ENCODE measurements at regions of chr20 and their contacts with region 1.

Region 1: GRCh38 chr20:49915378-49916145 is at the start of gene SPATA2:
- DNase-seq: peak; percentile 91
- H3K4me3 ChIP-seq: peak within 1 kb of the TSS; percentile 65 to 81 (median 66)
- H3K27ac ChIP-seq: peak within 1 kb of the TSS; percentile 97
- H3K4me1 ChIP-seq: peaks cover 21% of the 10 kb centered on the region
- H3K27me3 ChIP-seq: no peaks in the 10 kb centered on the region
- CTCF ChIP-seq: no peak
- total RNA-seq, gene SPATA2: 4.2 to 6.9 TPM

Region 2: DNA sequence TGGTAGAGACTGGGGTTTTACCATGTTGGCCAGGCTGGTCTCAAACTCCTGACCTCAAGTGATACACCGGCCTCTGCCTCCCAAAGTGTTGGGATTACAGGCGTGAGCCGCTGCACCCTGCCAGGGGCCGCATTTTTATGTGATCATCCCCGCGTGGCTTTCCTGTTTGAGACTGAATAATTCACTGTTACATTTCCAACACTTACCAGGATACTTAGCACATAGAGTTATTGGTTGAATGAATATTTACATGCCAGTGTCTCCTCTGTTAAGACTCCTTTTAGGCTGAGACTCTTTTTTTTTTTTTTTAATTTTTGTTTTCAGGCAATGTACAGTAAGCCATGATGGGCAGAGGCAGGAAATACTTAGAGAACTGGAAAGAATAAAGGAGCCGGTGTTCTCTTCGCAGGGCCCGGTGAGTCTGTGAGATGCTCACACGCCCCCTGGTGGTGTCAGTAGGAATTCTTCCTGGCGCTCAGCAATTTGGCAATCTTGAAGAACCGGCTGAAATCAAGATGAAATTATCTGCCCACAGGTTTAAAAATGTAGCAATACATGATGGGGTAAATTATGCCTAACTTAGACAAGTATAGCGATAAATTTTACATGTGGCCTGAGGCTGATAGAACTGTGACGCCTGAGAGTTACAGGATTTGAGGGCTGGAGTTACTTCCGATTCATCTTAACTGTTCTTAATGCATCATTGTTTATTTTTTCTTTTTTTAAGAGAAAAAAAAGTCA is 13.0 kb after region 1 on chr20:
- CTCF ChIA-PET with region 1: no interaction called
- dilution Hi-C with region 1: no loop called
- in situ Hi-C with region 1: no loop called
- intact Hi-C with region 1: loop called (anchors 1 kb)
- DNase-seq: peak; percentile 79
- H3K4me3 ChIP-seq: no peak overlapping the region
- H3K27ac ChIP-seq: no peak overlapping the region
- H3K4me1 ChIP-seq: peaks cover 6% of the 10 kb centered on the region
- H3K27me3 ChIP-seq: no peaks in the 10 kb centered on the region
- CTCF ChIP-seq: peak; percentile 90

Region 3: GRCh38 chr20:50070991-50071888 is 155.7 kb after region 1 on chr20:
- CTCF ChIA-PET with region 1: no interaction called
- dilution Hi-C with region 1: no loop called
- in situ Hi-C with region 1: no loop called
- intact Hi-C with region 1: loop called (anchors 1 kb)
- DNase-seq: peak; percentile 68
- H3K4me3 ChIP-seq: peak overlapping the region; percentile 23 to 46 (median 42)
- H3K27ac ChIP-seq: no peak overlapping the region
- H3K4me1 ChIP-seq: no peaks in the 10 kb centered on the region
- H3K27me3 ChIP-seq: no peaks in the 10 kb centered on the region
- CTCF ChIP-seq: peak; percentile 95 to 98

Measured in mammary epithelial cell (primary cell).